ENCODE measurements at regions of chr20 and their contacts with region 1.

Region 1: DNA sequence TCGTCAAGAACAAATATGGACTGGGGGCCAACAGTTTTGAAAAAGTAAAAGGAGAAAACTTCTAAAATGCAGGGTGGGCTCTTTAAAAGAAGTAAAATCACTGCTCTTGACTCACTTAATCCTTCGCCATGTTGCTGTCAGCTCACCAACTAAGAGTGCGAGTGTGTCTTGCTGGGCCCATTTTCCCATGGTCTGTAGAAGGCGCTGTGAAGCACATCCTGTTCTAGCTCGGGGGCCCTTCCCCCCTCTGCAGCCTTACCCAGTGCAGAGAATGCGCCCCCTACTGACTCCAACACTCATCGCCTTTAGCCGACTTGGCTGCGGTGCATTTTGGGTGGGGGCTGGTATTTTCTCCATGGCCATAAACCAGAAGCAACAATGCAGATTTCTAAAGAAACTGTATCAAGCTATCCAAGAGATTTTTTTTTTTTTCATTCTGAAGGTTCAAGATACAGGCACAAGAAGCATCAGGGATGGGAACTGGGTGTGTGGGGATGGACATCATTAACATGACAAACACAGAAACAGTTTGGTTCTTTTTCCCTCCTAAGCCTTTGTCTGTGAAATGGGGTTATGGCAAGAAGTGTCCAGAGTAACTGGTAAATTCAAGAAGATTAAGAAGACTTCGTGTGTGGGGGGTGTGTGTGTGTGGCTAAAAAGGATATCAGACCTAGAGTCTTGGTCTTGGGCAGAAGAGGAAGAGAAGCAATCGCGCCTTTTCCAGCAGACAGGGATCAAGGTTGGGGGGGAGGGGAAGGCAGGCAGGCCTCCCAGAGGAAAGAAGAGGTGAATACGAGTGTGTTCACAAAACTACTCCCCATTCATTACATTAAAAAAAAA is 1.7 kb downstream of the ADNP start:
- DNase-seq: peak; percentile 74
- ATAC-seq: peak; percentile 66
- H3K4me3 Mint-ChIP-seq: peak overlapping the region; percentile 85
- H3K27ac Mint-ChIP-seq: peak overlapping the region; percentile 92
- H3K4me1 Mint-ChIP-seq: peaks cover 52% of the 10 kb centered on the region
- H3K27me3 Mint-ChIP-seq: no peaks in the 10 kb centered on the region
- CTCF ChIP-seq: no peak

Region 2: DNA sequence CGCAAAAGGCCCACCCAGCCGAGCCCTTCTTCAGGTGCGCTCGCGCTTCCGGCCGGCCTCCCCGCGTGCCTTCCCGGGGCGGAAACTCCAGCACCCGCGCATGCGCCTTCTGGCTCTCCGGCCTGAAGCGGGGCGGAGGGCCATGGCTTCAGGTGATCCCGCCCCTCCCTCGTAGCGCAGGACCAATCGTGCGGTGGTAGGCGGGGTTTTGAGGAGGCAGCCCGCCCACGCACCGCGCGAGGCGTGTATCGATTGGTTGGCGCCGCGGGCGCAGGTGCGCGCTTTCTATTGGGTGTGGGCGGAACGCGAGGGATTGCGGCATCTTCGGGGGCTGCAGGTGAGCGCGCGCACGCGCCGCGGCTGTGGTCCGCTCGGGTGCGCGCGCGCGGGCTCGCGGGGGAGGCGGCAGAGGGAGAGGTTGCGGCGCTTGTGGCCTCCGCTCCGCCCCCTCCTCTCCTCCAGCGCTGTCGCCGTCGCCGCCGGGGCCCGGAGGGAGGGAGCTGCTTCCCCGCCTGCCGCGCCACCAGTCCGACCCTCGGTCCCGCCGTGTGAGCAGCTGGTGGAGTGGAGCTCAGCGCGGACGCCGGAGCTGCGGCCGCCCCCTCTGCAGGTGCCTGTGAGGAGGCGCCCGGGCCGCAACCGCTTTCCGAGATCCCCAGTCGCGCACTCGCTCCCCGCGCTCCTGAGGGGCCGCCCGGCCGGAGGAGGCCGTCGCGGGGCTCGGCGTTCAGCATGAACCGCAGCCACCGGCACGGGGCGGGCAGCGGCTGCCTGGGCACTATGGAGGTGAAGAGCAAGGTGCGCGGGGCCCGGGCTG is 198.3 kb before region 1 on chr20 and contains the start of gene PARD6B:
- CTCF ChIA-PET with region 1: no interaction called
- POLR2A ChIA-PET with region 1: interaction called, 4 read pairs
- intact Hi-C with region 1: loop called (anchors 1 kb)
- DNase-seq: peak; percentile 98
- ATAC-seq: peak; percentile 94
- H3K4me3 Mint-ChIP-seq: peak within 1 kb of the TSS; percentile 89
- H3K27ac Mint-ChIP-seq: peak within 1 kb of the TSS; percentile 71
- H3K4me1 Mint-ChIP-seq: peaks cover 16% of the 10 kb centered on the region
- H3K27me3 Mint-ChIP-seq: peaks cover 2% of the 10 kb centered on the region
- CTCF ChIP-seq: no peak
- total RNA-seq, gene PARD6B: 3.8 and 5.7 TPM in 2 replicates

Region 3: GRCh38 chr20:50815162-50815989 is 114.1 kb before region 1 on chr20:
- CTCF ChIA-PET with region 1: interaction called, 22 read pairs
- POLR2A ChIA-PET with region 1: interaction called, 120 read pairs
- intact Hi-C with region 1: loop called (anchors 1 kb)
- DNase-seq: no peak
- ATAC-seq: peak; percentile 56
- H3K4me3 Mint-ChIP-seq: peak overlapping the region; percentile 81
- H3K27ac Mint-ChIP-seq: peak overlapping the region; percentile 98
- H3K4me1 Mint-ChIP-seq: peaks cover 96% of the 10 kb centered on the region
- H3K27me3 Mint-ChIP-seq: no peaks in the 10 kb centered on the region
- CTCF ChIP-seq: no peak

Region 4: DNA sequence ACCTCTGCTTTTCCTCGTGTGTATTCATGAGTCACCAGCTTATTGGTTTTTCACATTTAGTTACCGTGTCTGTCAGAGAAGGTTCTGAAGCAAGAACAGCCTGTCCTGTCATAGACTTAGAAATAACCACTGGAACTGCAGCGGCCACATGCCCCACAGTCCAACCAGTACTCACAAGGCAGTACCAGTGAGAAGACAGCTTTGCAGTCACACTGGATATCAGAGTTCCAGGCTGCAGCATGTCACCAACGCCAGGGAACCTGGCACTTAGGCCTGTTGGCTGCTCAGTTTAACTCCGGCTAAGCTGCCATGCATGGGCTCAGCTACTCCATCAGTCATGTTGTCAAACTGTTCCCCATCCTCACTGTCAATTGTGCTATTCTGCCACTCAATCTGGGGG is 38.4 kb before region 1 on chr20:
- CTCF ChIA-PET with region 1: interaction called, 4 read pairs
- POLR2A ChIA-PET with region 1: interaction called, 8 read pairs
- intact Hi-C with region 1: loop called (anchors 5 kb)
- DNase-seq: no peak
- ATAC-seq: no peak
- H3K4me3 Mint-ChIP-seq: no peak overlapping the region
- H3K27ac Mint-ChIP-seq: no peak overlapping the region
- H3K4me1 Mint-ChIP-seq: peaks cover 17% of the 10 kb centered on the region
- H3K27me3 Mint-ChIP-seq: no peaks in the 10 kb centered on the region
- CTCF ChIP-seq: no peak

Region 5: DNA sequence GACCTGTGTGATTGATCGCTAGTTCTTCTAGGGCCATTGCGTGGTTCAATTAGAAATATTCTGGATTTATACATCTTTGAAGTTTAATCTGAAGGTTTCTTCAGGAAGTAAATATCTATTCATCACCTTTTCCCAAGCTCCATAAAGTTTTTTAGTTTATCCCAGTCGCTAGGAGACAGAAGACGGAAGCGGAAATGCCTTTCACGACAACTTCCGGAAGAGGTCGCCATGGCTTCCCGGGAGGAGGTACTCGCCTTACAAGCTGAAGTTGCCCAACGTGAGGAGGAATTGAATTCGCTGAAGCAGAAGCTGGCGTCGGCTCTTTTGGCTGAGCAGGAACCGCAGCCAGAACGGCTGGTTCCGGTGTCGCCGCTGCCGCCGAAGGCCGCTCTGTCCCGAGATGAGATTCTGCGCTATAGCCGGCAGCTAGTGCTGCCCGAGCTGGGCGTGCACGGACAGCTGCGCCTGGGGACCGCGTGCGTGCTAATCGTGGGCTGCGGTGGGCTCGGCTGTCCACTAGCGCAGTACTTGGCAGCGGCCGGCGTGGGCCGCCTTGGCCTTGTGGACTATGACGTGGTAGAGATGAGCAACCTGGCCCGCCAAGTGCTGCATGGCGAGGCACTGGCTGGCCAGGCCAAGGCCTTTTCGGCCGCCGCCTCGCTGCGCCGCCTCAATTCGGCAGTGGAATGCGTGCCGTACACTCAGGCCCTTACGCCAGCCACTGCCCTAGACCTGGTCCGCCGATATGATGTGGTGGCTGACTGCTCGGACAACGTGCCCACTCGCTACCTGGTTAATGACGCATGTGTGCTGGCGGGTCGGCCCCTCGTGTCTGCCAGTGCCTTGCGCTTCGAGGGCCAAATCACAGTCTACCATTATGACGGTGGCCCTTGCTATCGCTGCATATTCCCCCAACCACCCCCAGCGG is 29.4 kb after region 1 on chr20 and contains the start of gene MOCS3:
- CTCF ChIA-PET with region 1: interaction called, 26 read pairs
- POLR2A ChIA-PET with region 1: interaction called, 126 read pairs
- intact Hi-C with region 1: loop called (anchors 1 kb)
- DNase-seq: peak; percentile 61
- ATAC-seq: peak; percentile 81
- H3K4me3 Mint-ChIP-seq: peak within 1 kb of the TSS; percentile 96
- H3K27ac Mint-ChIP-seq: peak within 1 kb of the TSS; percentile 99
- H3K4me1 Mint-ChIP-seq: peaks cover 49% of the 10 kb centered on the region
- H3K27me3 Mint-ChIP-seq: no peaks in the 10 kb centered on the region
- CTCF ChIP-seq: no peak
- total RNA-seq, gene MOCS3: 7.5 and 8.1 TPM in 2 replicates

Region 6: GRCh38 chr20:51076786-51077685 is 147.5 kb after region 1 on chr20:
- CTCF ChIA-PET with region 1: no interaction called
- POLR2A ChIA-PET with region 1: no interaction called
- intact Hi-C with region 1: no loop called
- DNase-seq: no peak
- ATAC-seq: no peak
- H3K4me3 Mint-ChIP-seq: no peak overlapping the region
- H3K27ac Mint-ChIP-seq: no peak overlapping the region
- H3K4me1 Mint-ChIP-seq: peaks cover 13% of the 10 kb centered on the region
- H3K27me3 Mint-ChIP-seq: peaks cover 30% of the 10 kb centered on the region
- CTCF ChIP-seq: no peak

Measured in activated B cell treated with CpG ODN at 0.5 μM for 24 hours (primary cell).